Heart left ventricle (tissue), 16 donors: ENCODE measurements at regions of chr10 and their contacts with region 1.

Region 1: DNA sequence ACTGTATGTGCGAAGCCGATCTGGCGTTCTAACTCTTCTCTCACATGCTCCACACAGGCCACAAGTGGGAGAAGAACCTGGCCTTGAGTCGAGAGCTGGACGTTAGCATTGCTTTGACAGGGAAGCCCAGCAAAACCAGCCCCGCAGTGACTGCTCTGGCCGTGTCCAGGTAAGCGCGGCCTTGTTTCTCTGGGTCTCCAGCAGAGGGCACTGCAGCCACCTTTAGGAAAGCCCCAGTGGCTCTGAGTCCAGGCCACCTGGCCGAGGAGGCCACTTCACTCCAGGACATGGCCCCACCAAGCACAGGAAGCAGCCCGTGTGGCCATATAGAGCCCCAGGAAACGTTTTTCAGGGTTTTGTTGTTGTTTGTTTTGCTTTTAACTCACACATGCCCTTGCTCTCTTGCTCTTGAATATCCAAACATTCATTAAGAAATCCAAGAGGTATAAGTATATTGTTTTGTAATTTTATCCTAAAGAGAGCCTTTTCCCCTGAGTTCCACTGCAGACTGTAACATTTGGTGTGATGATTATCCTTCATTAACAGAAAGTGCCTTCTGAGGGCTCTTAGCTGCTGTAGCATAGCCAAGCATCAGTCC is 41.8 kb upstream of the LRRC18 start:
- DNase-seq: peak in 4 of 5 donors; percentile 60 to 68 (median 61)
- ATAC-seq: peak; percentile 69 to 93 (median 86)
- H3K4me3 ChIP-seq: no peak overlapping the region
- H3K27ac ChIP-seq: no peak overlapping the region
- H3K4me1 ChIP-seq: peaks cover 0 to 6% (median 4%) of the 10 kb centered on the region in 12 donors
- H3K27me3 ChIP-seq: no peaks in the 10 kb centered on the region
- CTCF ChIP-seq: peak; percentile 79 to 93 (median 88)
- POLR2A ChIP-seq: no peak

Region 2: DNA sequence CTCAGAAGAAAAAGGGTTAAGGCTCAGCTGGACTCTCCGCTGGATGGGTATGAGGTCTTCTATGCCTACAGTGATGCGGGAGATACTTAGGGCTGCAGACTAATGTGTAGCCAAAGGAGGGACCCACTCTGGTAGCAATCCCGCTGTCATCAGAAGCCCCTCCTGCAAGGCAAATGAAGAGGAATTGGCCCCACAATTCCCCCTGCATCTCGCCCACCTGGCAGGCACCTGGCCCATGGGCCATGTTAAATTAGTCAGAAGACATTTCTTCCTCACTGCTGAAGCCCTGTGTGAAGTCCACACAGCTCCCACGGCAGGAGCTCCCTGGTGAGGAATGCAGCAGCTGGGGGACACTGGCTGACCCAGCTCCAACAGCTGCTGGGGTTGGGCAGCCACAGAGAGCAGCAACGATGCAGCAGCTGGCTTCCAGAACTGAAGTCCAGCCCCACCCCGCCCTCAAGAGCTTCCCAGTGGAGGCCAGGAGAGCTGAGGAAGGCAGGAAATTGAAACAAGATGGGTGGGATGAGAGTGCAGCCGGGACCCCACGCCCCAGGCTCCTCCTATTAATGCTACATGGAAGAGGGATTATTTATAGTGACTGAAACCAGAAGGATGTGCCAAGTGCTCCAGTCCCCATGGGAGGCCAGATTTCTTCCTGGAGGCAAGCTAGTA is 128.4 kb after region 1 on chr10:
- intact Hi-C with region 1: loop called in 5 of 10 experiments (anchors 5 kb)
- DNase-seq: peak; percentile 81 to 91 (median 86)
- ATAC-seq: peak; percentile 76 to 88 (median 81)
- H3K4me3 ChIP-seq: peak overlapping the region in 4 of 12 donors; percentile 7 to 33 (median 22)
- H3K27ac ChIP-seq: peak overlapping the region in 9 of 12 donors; percentile 6 to 72 (median 53)
- H3K4me1 ChIP-seq: peaks cover 7 to 100% (median 68%) of the 10 kb centered on the region in 12 donors
- H3K27me3 ChIP-seq: no peaks in the 10 kb centered on the region
- CTCF ChIP-seq: no peak
- POLR2A ChIP-seq: no peak

Region 3: DNA sequence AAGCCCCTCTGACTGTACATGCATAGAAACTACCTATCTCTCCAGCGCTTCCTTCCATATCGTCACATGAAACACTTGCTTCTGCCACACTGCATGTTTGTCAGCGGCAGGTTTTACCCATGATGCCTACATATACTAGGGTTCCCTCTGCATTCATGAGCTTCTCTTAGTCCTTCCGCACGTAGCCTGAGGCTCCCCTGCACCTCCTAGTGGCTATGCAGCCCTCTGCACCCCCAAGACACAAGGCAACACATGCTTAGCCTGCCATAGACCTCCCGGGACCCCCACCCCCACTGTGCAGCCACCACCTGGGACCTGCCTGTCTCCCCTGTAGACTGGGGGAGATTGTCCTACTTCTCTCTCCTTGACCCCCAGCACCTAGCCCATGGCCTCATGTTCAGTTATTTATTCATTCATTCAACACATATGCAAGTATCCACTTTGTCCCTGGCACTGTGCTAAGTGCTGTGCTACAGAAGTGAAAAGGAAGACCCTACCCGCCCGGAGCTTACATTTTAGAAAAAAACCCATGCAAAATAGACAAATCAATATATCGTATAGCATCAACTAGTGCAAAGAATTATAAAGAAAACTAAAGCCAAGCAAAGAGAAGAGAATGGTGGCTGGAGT is 183.3 kb after region 1 on chr10:
- intact Hi-C with region 1: loop called (anchors 2 to 5 kb)
- DNase-seq: peak in 1 of 5 donors; percentile 49
- ATAC-seq: peak; percentile 56 to 86 (median 78)
- H3K4me3 ChIP-seq: no peak overlapping the region
- H3K27ac ChIP-seq: no peak overlapping the region
- H3K4me1 ChIP-seq: peaks cover 0 to 25% (median 7%) of the 10 kb centered on the region in 12 donors
- H3K27me3 ChIP-seq: no peaks in the 10 kb centered on the region
- CTCF ChIP-seq: peak; percentile 50 to 74 (median 62)
- POLR2A ChIP-seq: no peak

Region 4: DNA sequence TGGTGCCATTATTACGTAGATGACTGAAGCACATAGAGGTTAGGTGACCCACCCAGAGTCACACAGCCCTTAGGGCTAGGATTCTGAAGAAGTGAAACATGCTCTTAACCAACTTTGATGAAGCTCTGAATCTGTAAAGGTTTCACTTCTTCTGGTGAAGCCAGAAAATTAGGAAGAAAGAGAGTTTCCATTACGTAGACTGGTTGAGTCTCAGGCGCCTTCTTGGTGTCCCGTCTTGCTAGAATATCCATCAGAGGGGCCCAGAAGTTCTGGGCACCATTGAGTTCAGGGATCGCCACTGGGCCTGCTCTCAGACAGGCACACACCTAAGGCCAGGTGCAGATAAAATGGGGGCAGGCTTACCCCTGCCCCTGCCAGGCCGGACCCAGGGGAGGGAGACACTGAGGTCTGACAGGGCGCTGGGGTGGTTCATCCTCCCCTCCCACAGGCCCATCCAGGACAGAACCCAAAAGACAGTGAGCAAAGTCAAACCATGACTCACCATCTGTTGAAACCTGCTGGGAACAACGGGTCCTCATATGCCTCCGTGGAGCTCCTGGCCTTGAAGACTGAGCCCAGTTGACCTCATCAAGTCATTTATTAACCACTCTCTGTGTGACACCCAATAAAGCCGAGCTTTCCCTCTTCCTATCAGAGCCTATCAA is 381.3 kb after region 1 on chr10:
- intact Hi-C with region 1: loop called in 3 of 10 experiments (anchors 5 to 10 kb)
- DNase-seq: no peak
- ATAC-seq: no peak
- H3K4me3 ChIP-seq: no peak overlapping the region
- H3K27ac ChIP-seq: no peak overlapping the region
- H3K4me1 ChIP-seq: peaks cover 0 to 29% (median 16%) of the 10 kb centered on the region in 12 donors
- H3K27me3 ChIP-seq: no peaks in the 10 kb centered on the region
- CTCF ChIP-seq: no peak
- POLR2A ChIP-seq: no peak

Region 5: DNA sequence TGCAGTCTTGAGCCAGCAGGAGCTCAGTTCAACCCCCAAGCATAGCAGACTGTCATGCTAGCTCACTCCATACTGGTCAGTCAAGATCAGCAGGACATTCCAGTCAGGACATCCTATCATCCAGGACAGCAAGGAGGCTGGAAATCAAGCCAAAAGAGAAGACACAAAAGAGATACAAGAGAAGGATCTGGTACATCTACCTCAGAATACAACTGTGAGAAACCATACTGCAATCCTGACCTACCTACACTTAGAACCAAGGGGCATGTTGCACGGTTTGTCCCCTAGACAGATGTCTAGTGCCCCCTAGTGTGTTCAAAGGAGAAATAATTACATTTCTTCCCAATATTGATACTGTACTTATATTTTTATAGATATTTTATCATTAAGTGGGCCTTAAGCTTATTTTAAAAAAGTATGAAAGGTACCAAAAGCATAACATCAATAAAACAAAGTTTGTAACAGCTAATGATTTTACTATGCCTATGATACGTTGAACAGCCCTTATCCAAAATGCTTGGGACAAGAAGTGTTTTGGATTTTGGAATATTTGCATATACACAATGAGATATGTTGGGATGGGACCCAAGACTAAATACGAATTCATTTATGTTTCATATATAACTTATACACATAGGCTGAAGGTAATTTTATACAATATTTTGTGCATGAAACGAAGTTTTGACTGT is 530.9 kb after region 1 on chr10:
- intact Hi-C with region 1: loop called in 9 of 10 experiments (anchors 2 to 10 kb)
- DNase-seq: no peak
- ATAC-seq: peak in 3 of 4 donors; percentile 34 to 51 (median 50)
- H3K4me3 ChIP-seq: no peak overlapping the region
- H3K27ac ChIP-seq: no peak overlapping the region
- H3K4me1 ChIP-seq: peaks cover 0 to 17% (median 5%) of the 10 kb centered on the region in 12 donors
- H3K27me3 ChIP-seq: no peaks in the 10 kb centered on the region
- CTCF ChIP-seq: peak; percentile 44 to 71 (median 64)
- POLR2A ChIP-seq: no peak